Activated CD8-positive, alpha-beta T cell treated with anti-CD3 and anti-CD28 coated beads for 36 hours (primary cell): ENCODE measurements at regions of chr18 and their contacts with region 1.

Region 1: DNA sequence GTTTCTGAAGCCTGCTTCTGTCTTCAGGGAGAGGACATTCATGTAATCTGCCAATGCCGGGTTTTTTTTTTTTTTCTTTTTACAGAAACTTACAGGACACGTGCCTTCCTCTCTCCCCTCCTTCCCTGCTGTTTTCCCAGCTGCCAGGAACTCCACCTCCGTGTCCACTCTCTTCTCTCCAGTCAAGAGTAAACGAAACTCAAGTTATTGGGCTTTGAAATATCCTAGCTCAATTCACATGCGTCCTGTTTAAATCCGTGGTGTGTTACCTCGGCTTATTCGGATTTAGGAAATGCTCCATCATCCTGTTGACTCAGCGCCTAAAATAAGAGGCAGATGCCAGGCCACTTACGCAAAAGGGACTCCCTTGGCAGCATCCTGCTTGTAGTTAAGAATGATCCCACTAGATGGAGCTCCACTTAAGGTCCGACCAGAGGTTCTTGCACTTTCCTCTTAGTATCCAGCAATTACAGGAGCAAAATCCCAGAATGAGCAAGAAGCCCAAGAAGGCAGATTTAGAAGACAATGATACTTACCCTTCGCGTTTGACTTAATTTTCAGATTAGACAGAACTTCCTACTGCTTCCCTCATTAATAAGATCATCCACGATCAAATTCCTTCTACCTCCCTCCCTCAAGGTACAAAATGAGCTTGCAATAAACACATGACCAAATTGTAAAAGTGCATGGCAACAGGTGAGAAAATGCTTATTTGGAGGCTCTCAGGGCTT is 97.2 kb upstream of the ZCCHC2 start:
- DNase-seq: peak; percentile 75
- ATAC-seq: peak; percentile 45
- H3K4me3 Mint-ChIP-seq: no peak overlapping the region
- H3K27ac Mint-ChIP-seq: no peak overlapping the region
- H3K4me1 Mint-ChIP-seq: peaks cover 34% of the 10 kb centered on the region
- H3K27me3 Mint-ChIP-seq: peaks cover 2% of the 10 kb centered on the region
- CTCF ChIP-seq: peak; percentile 84

Region 2: DNA sequence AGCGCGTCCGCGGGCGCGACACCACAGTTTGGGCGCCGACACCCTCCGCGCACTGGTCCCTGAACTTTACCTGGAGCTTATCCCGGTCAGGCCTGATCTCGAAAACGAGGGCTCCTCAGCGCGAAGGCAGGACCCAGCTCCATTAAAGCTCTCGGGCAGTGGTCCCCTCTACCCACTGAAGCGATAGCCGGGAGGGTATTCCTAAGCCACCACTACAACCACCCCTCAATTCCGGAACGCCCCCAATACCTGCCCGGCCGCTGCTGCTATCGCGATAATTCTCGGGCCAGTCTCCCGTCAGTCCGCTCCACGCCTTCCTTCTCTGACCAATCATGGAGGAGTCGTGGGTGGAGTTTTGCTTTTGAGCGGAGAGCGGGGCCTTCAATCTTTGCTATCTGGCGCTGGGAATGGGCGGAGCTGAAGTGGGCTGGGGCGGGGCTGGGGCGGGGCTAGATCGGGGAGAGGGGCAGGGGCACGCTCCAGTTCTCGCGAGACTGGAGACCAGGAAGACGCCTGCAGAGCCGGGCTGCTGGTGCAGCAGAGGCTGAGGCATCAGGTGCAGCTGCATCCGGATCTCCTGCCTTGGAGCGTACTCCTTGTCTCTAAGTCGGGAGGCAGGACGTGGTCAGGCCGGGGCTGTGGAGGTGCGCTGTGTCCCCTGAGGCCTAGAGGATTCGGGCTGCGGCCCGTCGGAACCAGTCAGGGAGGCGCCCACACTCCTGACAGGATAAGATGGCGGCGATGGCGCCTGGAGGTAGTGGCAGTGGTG is 238.7 kb before region 1 on chr18 and contains the starts of genes PIGN and RELCH:
- CTCF ChIA-PET with region 1: interaction called, 3 read pairs
- POLR2A ChIA-PET with region 1: no interaction called
- intact Hi-C with region 1: loop called (anchors 2 kb)
- DNase-seq: peak; percentile 97
- ATAC-seq: peak; percentile 94
- H3K4me3 Mint-ChIP-seq: peak within 1 kb of the TSS; percentile 99
- H3K27ac Mint-ChIP-seq: peak within 1 kb of the TSS; percentile 96
- H3K4me1 Mint-ChIP-seq: peaks cover 48% of the 10 kb centered on the region
- H3K27me3 Mint-ChIP-seq: no peaks in the 10 kb centered on the region
- CTCF ChIP-seq: no peak
- total RNA-seq, gene PIGN: 24.9 to 28.1 TPM
- total RNA-seq, gene RELCH: 18.4 to 21.7 TPM

Region 3: DNA sequence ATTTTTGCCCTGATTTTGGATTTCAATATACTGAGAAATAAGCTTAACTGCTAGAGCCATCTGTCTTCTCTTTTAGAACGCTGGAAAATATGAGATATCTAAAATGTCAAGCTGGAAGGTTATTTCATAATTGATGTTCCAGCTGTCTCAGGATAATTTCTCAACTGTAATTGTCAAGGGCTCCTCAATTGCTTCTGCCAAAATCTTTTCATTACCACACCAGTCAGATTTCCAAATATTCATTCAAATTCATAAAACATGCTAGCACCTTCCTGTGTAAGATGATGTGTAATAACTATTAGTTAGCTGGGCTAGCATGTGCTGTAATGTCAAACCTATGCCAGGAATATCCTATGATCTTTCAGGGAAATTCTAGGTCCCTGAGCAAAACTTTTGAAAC is 12.4 kb before region 1 on chr18:
- CTCF ChIA-PET with region 1: interaction called, 12 read pairs
- POLR2A ChIA-PET with region 1: interaction called, 3 read pairs
- intact Hi-C with region 1: no loop called
- DNase-seq: no peak
- ATAC-seq: no peak
- H3K4me3 Mint-ChIP-seq: no peak overlapping the region
- H3K27ac Mint-ChIP-seq: no peak overlapping the region
- H3K4me1 Mint-ChIP-seq: peaks cover 9% of the 10 kb centered on the region
- H3K27me3 Mint-ChIP-seq: peaks cover 3% of the 10 kb centered on the region
- CTCF ChIP-seq: no peak

Region 4: DNA sequence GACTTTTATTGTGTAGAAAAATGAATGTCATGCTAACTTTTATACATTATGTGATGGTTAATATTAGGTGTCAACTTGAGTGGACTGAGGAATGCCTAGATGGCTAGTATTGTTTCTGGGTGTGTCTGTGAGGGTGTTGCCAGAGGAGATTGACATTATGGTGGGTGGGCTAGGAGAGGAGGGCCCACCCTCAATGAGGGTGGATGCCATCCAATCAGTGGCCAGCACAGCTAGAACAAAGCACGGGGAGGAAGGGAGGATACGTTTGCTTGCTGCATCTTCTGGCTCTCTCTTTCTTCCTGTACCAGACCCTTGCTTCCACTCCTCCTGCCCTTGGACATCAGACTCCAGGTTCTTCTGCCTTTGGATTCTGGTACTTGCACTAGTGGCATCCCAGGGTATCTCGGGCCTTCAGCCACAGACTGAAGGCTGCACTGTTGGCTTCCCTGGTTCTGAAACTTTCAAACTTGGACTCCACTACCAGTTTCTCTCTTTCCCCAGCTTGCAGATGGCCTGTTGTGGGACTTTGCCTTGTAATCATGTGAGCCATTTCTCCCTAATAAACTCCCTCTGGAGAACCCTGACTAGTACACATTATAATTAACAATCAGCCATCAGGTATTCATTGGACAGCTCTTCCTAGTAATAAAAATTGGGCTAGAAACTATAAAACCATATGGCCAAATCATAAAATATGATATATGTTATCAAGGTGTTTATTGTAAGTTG is 65.5 kb after region 1 on chr18:
- CTCF ChIA-PET with region 1: interaction called, 10 read pairs
- POLR2A ChIA-PET with region 1: no interaction called
- intact Hi-C with region 1: no loop called
- DNase-seq: no peak
- ATAC-seq: no peak
- H3K4me3 Mint-ChIP-seq: no peak overlapping the region
- H3K27ac Mint-ChIP-seq: no peak overlapping the region
- H3K4me1 Mint-ChIP-seq: peaks cover 6% of the 10 kb centered on the region
- H3K27me3 Mint-ChIP-seq: peaks cover 11% of the 10 kb centered on the region
- CTCF ChIP-seq: no peak

Region 5: DNA sequence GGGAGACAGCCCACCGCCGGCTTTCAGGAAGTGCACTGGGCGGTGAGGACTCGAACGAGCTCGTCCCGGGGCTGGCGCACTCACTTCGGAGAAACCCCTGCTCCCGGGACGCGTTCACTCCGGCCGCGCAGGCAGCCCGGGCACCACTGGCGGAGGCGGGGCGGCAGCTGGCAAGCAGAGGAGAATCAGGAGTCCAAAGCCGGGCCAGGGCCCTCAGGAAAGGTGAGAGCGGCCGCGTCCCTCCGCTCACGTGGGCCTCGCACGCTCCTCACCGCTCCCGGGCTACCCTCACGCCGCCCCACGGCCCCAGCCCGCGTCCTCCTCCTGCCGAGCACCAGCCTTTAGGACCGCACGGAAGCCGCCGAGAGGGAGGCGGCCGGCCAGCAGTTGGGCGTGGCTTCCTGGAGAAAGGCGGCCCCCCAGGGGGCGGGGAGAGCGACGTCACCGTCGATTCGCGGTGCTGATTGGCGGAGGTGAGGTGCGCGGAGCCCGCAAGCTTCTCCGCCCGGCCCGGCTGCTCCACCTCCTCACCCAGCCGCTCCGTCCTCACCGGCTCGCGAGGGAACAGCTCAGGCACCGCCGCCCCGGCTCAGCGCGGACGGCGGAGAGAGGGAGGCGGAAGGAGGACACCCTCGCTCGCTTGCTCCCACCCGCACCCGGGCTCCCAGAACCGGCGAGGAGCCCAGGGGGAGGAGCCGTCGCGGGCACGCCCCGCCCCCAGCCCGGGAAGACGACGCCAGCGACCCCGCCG is 97.0 kb after region 1 on chr18 and contains the start of gene ZCCHC2:
- CTCF ChIA-PET with region 1: interaction called, 16 read pairs
- POLR2A ChIA-PET with region 1: interaction called, 6 read pairs
- intact Hi-C with region 1: no loop called
- DNase-seq: peak; percentile 97
- ATAC-seq: peak; percentile 80
- H3K4me3 Mint-ChIP-seq: peak within 1 kb of the TSS; percentile 84
- H3K27ac Mint-ChIP-seq: peak within 1 kb of the TSS; percentile 89
- H3K4me1 Mint-ChIP-seq: peaks cover 20% of the 10 kb centered on the region
- H3K27me3 Mint-ChIP-seq: no peaks in the 10 kb centered on the region
- CTCF ChIP-seq: no peak
- total RNA-seq, gene ZCCHC2: 31.7 to 33.4 TPM

Region 6: GRCh38 chr18:62571648-62572047 is 146.0 kb after region 1 on chr18:
- CTCF ChIA-PET with region 1: interaction called, 12 read pairs
- POLR2A ChIA-PET with region 1: no interaction called
- intact Hi-C with region 1: loop called (anchors 5 kb)
- DNase-seq: no peak
- ATAC-seq: peak; percentile 67
- H3K4me3 Mint-ChIP-seq: no peak overlapping the region
- H3K27ac Mint-ChIP-seq: peak overlapping the region; percentile 43
- H3K4me1 Mint-ChIP-seq: peaks cover 15% of the 10 kb centered on the region
- H3K27me3 Mint-ChIP-seq: no peaks in the 10 kb centered on the region
- CTCF ChIP-seq: no peak